Mammary epithelial cell (primary cell): ENCODE measurements at regions of chr13 and their contacts with region 1.

Region 1: DNA sequence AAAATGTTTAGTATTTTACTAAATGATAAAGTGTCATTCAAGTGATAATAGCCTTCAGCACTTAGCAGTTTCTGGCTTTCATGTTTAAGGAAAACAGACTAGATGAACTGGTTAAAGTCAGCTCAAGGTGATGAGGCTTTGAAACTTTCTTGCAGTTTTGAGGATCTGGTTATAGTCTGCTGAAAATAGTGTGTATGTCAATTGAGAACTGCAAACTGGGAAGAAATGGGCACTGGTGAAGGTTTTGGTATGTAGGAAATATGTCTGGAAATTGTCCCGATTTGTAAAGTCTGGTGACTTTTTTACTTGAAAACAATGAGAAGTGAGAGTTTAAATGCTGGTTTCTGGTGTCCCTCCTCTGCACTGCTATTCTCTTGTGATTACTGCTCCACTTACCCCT is 36.8 kb upstream of the SOX21 start:
- DNase-seq: no peak
- H3K4me3 ChIP-seq: no peak overlapping the region
- H3K27ac ChIP-seq: no peak overlapping the region
- H3K4me1 ChIP-seq: no peaks in the 10 kb centered on the region
- H3K27me3 ChIP-seq: no peaks in the 10 kb centered on the region
- CTCF ChIP-seq: no peak

Region 2: GRCh38 chr13:94800423-94800822 is 51.3 kb after region 1 on chr13:
- CTCF ChIA-PET with region 1: no interaction called
- dilution Hi-C with region 1: no loop called
- in situ Hi-C with region 1: no loop called
- intact Hi-C with region 1: no loop called
- DNase-seq: peak; percentile 1
- H3K4me3 ChIP-seq: no peak overlapping the region
- H3K27ac ChIP-seq: no peak overlapping the region
- H3K4me1 ChIP-seq: no peaks in the 10 kb centered on the region
- H3K27me3 ChIP-seq: no peaks in the 10 kb centered on the region
- CTCF ChIP-seq: peak; percentile 41 to 48

Region 3: DNA sequence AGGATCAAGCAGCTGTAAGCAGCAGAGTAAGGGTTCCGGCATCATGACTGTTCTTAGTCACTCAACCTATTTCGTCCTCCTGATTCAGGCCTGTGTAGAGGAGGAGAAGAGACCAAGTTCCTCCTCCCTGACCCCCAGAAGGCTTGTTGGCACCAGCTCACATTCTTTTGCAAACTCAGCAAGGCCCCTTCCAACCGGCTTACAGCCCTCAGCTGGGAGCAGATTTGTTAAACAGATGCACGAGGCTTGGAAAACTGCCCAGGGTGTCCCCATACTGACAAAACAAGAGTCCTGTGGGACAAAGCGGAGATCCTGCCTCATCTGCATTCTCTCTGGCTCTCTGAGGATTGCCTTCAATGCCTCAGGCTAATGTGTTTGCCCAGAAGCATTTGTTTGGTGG is 76.3 kb after region 1 on chr13:
- CTCF ChIA-PET with region 1: no interaction called
- dilution Hi-C with region 1: loop called (anchors 5 kb)
- in situ Hi-C with region 1: no loop called
- intact Hi-C with region 1: no loop called
- DNase-seq: no peak
- H3K4me3 ChIP-seq: no peak overlapping the region
- H3K27ac ChIP-seq: no peak overlapping the region
- H3K4me1 ChIP-seq: no peaks in the 10 kb centered on the region
- H3K27me3 ChIP-seq: no peaks in the 10 kb centered on the region
- CTCF ChIP-seq: no peak

Region 4: GRCh38 chr13:94842901-94843300 is 93.7 kb after region 1 on chr13:
- CTCF ChIA-PET with region 1: no interaction called
- dilution Hi-C with region 1: no loop called
- in situ Hi-C with region 1: no loop called
- intact Hi-C with region 1: no loop called
- DNase-seq: no peak
- H3K4me3 ChIP-seq: no peak overlapping the region
- H3K27ac ChIP-seq: no peak overlapping the region
- H3K4me1 ChIP-seq: no peaks in the 10 kb centered on the region
- H3K27me3 ChIP-seq: no peaks in the 10 kb centered on the region
- CTCF ChIP-seq: no peak

Region 5: DNA sequence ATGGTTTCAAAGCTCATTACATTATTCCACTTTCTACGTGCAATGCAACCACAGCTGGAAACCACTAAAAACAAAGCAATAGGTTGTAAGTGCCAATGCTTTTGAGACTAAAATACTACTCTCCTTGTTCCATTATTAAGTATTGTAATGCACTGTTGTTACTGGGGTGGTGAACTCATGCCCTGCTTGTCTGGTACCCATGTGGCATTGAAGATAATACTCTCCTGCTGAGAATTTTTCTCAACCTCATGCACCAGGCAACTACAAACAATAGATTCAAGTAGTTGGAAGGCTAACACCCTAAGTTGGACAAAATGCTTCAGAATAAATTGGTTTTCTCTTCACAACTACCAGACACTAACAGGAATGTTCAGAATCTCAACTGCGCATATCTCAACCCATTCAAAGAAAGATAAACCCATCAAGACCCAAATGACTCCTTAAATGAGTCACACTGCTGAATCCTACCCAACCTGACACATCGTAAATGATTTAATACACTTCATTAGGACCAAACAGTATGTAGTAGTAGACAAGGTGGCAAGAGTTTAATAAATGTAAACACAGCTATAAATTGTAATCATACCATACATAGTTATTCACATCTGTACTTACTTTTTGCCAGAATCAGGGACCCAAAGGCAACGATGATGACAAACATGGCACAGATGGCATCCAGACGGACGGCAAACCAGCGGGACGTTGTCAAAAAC is 324.6 kb after region 1 on chr13:
- CTCF ChIA-PET with region 1: no interaction called
- dilution Hi-C with region 1: no loop called
- in situ Hi-C with region 1: no loop called
- intact Hi-C with region 1: no loop called
- DNase-seq: no peak
- H3K4me3 ChIP-seq: no peak overlapping the region
- H3K27ac ChIP-seq: no peak overlapping the region
- H3K4me1 ChIP-seq: no peaks in the 10 kb centered on the region
- H3K27me3 ChIP-seq: no peaks in the 10 kb centered on the region
- CTCF ChIP-seq: no peak